ENCODE measurements at regions of chr6 and their contacts with region 1.

Region 1: DNA sequence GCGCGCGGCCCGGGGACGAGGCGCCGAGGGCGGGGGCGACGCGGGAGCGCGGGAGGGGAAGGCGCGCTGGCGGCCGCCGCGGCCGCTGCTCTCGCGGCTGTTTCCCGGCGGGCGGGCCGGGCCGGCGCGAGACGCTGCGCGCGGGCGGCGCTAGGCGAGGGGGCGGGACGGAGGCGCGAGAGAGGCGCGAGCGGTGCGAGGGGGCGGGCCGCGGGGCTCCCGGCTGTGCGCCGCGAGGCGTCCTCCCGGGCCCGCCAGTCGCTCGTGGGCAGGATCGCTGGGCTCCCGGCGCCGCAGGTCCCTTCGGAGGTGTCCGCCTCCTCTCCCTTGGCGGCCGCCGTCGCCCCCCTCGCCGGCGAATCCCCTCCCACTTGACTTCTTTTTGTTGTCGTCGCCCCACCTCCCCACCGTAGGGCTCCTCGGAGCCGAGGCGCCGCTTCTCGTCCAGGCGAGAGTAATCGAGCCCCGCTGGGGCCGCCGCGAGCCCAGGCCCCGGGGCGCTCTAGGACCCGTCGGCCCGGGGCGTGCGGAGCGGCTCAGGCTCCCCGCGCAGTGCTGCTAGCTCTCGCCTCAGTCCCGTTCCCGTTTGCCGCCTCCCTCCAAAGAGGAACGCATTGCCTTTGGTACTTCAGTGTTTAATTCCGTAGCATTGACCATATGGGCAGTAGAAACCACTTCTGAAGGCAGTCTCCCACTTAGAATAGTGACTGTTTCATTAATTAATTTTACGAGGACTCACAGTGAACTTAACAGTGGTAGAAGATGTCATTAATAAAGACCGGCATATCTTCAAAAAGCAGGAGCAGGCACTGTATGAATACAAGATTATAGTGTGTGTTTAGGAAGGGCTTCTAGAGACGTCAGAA is at the start of gene RANBP9:
- DNase-seq: peak; percentile 62 to 89 (median 81)
- H3K4me3 ChIP-seq: peak within 1 kb of the TSS; percentile 68 to 95 (median 83)
- H3K27ac ChIP-seq: peak within 1 kb of the TSS; percentile 89 to 99 (median 96)
- H3K27me3 ChIP-seq: no peaks in the 10 kb centered on the region
- CTCF ChIP-seq: peak in 19 of 56 donors; percentile 8 to 41 (median 22)
- total RNA-seq, gene RANBP9: 48.7 to 98.0 (median 80.1) TPM

Region 2: GRCh38 chr6:13574149-13574570 is 137.8 kb before region 1 on chr6:
- intact Hi-C with region 1: loop called in 1 of 2 experiments (anchors 5 kb)
- DNase-seq: peak; percentile 70 to 92 (median 84)
- H3K4me3 ChIP-seq: peak overlapping the region; percentile 46 to 96 (median 87)
- H3K27ac ChIP-seq: peak overlapping the region; percentile 75 to 99 (median 97)
- H3K27me3 ChIP-seq: no peaks in the 10 kb centered on the region
- CTCF ChIP-seq: peak; percentile 26 to 78 (median 60)

Region 3: DNA sequence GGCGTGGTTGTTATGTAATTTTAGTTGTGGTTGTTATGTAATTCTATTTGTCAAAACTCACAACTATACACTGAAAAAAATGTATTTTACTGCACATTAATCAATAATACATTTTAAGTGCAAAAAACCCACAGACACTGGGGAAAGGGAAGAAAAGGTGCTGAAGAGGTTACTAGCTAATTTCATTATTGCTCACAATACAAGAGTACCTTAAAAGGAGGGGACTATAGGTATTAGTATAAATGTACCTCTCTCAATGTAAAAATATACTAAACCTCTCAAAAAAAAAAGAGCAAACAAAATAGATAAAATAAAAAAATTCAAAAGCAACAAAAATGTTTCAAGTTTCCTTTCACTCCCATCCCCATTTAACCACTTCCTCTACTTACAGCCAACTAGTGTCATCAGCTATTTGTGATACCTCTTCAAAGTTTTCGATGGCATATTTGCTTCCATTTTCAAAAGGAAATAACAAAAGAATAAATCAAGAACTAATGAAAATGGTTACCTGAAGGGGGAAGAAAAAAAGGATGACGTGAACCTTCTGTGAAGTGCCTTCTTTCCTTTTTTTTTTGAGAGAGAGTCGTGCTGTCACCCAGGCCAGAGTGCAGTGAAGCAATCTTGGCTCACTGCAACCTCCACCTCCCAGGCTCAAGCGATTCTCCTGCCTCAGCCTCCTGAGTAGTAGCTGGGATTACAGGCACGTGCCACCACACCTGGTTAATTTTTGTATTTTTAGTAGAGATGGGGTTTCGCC is 30.5 kb before region 1 on chr6:
- intact Hi-C with region 1: no loop called
- DNase-seq: no peak
- H3K4me3 ChIP-seq: no peak overlapping the region
- H3K27ac ChIP-seq: no peak overlapping the region
- H3K27me3 ChIP-seq: no peaks in the 10 kb centered on the region
- CTCF ChIP-seq: no peak

Region 4: DNA sequence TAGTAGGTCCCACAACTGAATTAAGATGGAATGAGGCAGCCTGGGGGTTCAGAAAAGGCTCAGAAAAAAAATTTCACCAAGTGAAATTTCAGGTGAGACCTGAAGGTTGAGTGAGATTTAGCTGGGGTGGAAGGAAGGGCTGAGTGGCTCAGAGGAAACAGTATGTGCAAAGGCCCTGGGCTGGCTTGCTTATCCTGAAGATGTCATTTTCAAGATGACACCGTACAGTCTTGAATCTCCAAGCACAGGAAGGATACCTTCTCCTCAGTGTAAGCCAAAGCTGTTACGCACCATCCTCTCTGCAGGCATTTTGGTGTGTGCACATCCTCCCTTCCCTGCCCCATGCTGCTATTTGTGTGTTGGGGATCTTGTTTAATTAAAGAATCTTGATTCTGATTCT is 42.7 kb after region 1 on chr6:
- intact Hi-C with region 1: no loop called
- DNase-seq: no peak
- H3K4me3 ChIP-seq: no peak overlapping the region
- H3K27ac ChIP-seq: no peak overlapping the region
- H3K27me3 ChIP-seq: no peaks in the 10 kb centered on the region
- CTCF ChIP-seq: no peak

Region 5: DNA sequence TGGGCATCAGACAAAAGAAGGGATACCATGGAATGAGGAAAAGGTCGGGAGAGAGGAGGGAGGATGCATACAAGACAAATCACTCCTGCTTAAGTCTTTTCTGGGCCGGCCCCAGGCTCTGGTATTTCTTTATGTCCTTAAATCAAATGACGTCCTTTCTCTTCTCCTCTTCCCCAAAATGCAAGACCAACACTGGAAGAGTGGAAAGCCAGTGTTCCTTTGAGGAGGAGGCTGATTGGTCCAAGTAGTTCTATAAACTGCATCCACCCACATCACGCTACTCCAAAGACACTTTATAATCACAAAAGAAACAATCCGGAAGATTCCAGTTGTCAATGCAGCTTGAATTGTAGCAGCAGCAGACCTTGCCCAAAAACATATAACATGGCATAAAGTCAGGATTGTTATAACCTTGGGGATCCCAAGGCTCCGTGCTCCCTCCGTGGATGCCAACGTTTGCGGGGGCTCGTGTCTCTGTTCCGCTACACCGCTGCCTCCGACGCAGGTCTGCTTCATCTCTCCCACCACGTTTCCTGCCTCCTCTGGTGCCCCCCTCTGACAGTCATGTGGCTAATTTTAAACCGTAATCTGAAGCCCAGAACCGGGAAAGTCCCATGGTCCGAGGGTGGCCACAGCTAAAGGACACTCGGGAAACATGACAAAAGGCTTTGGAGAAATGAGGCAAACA is 55.3 kb after region 1 on chr6:
- intact Hi-C with region 1: loop called in 1 of 2 experiments (anchors 5 kb)
- DNase-seq: peak in 8 of 10 donors; percentile 5 to 60 (median 52)
- H3K4me3 ChIP-seq: peak overlapping the region in 52 of 59 donors; percentile 1 to 57 (median 38)
- H3K27ac ChIP-seq: peak overlapping the region in 51 of 59 donors; percentile 1 to 85 (median 59)
- H3K27me3 ChIP-seq: no peaks in the 10 kb centered on the region
- CTCF ChIP-seq: peak in 28 of 56 donors; percentile 8 to 51 (median 24)

Region 6: DNA sequence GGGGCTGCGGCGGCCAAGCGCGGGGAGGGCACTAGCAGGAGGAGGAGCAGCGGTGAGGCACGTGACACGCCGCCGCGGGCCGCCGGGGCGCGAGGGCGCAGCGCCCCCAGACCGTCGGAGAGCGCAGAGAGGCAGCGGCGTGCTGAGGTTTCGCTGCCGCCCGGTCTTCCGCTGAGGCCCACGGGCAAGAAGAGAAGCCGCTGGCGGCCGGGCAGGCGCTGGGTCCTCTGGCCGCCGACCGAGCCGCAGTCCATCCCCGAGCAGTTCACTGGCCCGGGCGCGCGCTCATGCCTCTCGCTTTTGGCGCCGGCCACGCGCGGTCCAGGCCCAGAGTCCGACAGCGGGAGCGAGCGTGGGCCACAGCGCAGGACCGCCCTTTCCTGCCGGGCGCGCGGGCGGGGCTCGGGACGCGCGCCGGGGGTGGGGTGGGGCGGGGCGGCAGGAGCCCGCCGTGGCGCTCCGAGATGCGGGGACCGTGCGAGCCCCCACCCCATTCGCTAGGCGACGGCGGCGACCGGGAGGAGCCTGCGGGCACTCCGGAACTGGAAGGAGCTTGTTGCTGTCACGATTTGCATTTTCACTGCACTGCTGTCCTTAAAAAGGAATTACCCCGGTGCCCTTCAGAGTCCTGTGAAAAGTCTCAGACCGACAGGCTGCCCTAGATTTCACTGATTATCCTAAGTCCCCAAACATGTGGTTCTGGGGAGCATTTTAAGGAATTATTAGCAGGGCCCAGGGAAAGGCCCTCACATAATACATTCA is 102.4 kb after region 1 on chr6 and contains the start of gene MCUR1:
- intact Hi-C with region 1: loop called (anchors 2 to 5 kb)
- DNase-seq: peak; percentile 69 to 91 (median 82)
- H3K4me3 ChIP-seq: peak within 1 kb of the TSS; percentile 66 to 99 (median 92)
- H3K27ac ChIP-seq: peak within 1 kb of the TSS; percentile 60 to 99 (median 97)
- H3K27me3 ChIP-seq: no peaks in the 10 kb centered on the region
- CTCF ChIP-seq: peak in 53 of 56 donors; percentile 29 to 77 (median 52)
- total RNA-seq, gene MCUR1: 22.6 to 50.0 (median 35.4) TPM

Measured in dorsolateral prefrontal cortex (tissue), 120 donors.